PC-3 (cell line): ENCODE measurements at regions of chr16 and their contacts with region 1.

Region 1: DNA sequence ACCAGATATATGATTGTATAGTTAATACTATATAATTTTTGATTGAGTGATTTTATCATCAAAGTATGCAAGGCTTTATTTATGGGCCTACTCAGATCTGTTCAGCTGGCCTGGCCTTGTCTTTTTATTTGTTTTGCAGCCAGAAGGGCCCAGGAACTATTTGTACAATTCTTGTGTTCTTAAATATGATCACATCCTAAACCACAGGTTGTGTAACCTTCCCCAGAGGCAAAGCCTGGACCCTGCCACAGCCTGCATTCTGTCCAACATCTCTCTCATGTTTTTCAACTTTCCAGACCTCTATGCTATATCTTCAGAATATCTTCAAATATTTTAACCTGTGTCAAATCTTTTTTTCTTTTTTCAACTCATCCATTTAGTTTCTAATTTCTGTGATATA is 410.4 kb upstream of the MON1B start:
- DNase-seq: peak; percentile 85
- ATAC-seq: peak; percentile 89
- H3K4me3 ChIP-seq: no peak overlapping the region
- H3K27ac ChIP-seq: peak overlapping the region; percentile 38; the same call in 1 of the 2 replicates
- H3K4me1 ChIP-seq: peaks cover 34% of the 10 kb centered on the region
- H3K27me3 ChIP-seq: no peaks in the 10 kb centered on the region
- CTCF ChIP-seq: no peak

Region 2: DNA sequence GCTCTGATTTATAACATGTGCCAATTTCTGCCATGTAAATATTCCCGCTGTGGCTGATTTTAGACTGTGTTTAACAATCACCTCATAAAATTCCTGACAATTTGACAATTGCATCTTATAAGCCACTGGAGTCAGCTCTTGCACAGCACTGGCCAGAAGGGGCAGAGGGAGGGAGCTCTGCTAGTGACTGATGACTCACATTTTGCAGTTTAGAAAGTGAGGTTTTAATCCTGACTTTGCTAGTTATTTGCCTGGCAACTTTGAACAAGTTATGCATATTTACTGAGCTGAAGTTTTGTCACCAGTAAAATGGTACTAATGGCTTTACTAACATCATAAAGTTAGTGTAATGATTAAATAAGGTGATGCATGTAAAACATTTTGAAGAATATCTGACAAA is 51.0 kb before region 1 on chr16:
- CTCF ChIA-PET with region 1: no interaction called
- POLR2A ChIA-PET with region 1: no interaction called
- intact Hi-C with region 1: loop called (anchors 1 kb)
- DNase-seq: peak; percentile 78
- ATAC-seq: peak; percentile 97
- H3K4me3 ChIP-seq: no peak overlapping the region
- H3K27ac ChIP-seq: peak overlapping the region; percentile 43
- H3K4me1 ChIP-seq: peaks cover 14% of the 10 kb centered on the region
- H3K27me3 ChIP-seq: no peaks in the 10 kb centered on the region
- CTCF ChIP-seq: 0 out of 2 replicates have a peak, but pooled peaks have one; percentile 29

Region 3: GRCh38 chr16:76756951-76757350 is 23.6 kb before region 1 on chr16:
- CTCF ChIA-PET with region 1: no interaction called
- POLR2A ChIA-PET with region 1: no interaction called
- intact Hi-C with region 1: loop called (anchors 1 kb)
- DNase-seq: peak; percentile 59
- ATAC-seq: peak; percentile 31; the same call in 1 of the 2 replicates
- H3K4me3 ChIP-seq: no peak overlapping the region
- H3K27ac ChIP-seq: peak overlapping the region; percentile 46
- H3K4me1 ChIP-seq: peaks cover 7% of the 10 kb centered on the region; the same call in 1 of the 2 replicates
- H3K27me3 ChIP-seq: no peaks in the 10 kb centered on the region
- CTCF ChIP-seq: no peak

Region 4: GRCh38 chr16:76796416-76796815 is 15.9 kb after region 1 on chr16:
- CTCF ChIA-PET with region 1: no interaction called
- POLR2A ChIA-PET with region 1: no interaction called
- intact Hi-C with region 1: loop called (anchors 2 kb)
- DNase-seq: peak; percentile 58
- ATAC-seq: peak; percentile 59
- H3K4me3 ChIP-seq: peak overlapping the region; percentile 54; the same call in 1 of the 2 replicates
- H3K27ac ChIP-seq: peak overlapping the region; percentile 93
- H3K4me1 ChIP-seq: peaks cover 25% of the 10 kb centered on the region
- H3K27me3 ChIP-seq: no peaks in the 10 kb centered on the region
- CTCF ChIP-seq: no peak

Region 5: GRCh38 chr16:77062878-77063671 is 282.5 kb after region 1 on chr16:
- CTCF ChIA-PET with region 1: no interaction called
- POLR2A ChIA-PET with region 1: no interaction called
- intact Hi-C with region 1: no loop called
- DNase-seq: no peak
- ATAC-seq: no peak
- H3K4me3 ChIP-seq: no peak overlapping the region
- H3K27ac ChIP-seq: no peak overlapping the region
- H3K4me1 ChIP-seq: no peaks in the 10 kb centered on the region
- H3K27me3 ChIP-seq: 0 out of 2 replicates have a peak, but pooled peaks cover 7% of the 10 kb centered on the region
- CTCF ChIP-seq: no peak